ENCODE measurements at regions of chr4 and their contacts with region 1.

Region 1: DNA sequence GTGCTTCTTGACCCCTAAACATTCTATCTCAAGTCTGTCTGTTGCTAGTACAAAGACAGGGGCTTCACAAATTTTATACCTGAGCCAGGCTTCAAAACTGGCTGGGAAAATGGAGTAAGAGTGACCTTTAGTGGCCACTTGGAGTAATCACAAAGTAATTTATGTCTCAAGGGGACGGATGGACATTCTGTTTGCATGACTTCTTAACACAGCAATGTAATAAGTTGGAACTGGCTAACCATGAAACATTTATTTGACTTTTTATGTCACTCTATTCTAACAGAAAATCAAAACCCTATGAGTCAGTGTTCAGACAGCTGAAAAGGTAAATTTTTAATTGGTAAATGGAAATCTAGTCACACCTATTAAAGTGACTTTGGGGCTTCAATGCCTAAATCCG is 600.6 kb downstream of the ANKRD50 start:
- DNase-seq: peak; percentile 59
- ATAC-seq: peak; percentile 74; the same call in 1 of the 2 replicates
- H3K4me3 ChIP-seq: no peak overlapping the region
- H3K27ac ChIP-seq: no peak overlapping the region
- H3K4me1 ChIP-seq: no peaks in the 10 kb centered on the region
- H3K27me3 ChIP-seq: no peaks in the 10 kb centered on the region
- CTCF ChIP-seq: peak; percentile 44 to 77 (median 73); a peak in 5 of 6 replicates
- POLR2A ChIP-seq: no peak
- RAD21 ChIP-seq: peak; percentile 89

Region 2: GRCh38 chr4:123102897-123103471 is 1008.9 kb before region 1 on chr4:
- CTCF ChIA-PET with region 1: no interaction called
- POLR2A ChIA-PET with region 1: no interaction called
- RAD21 ChIA-PET with region 1: no interaction called
- intact Hi-C with region 1: loop called (anchors 1 kb)
- DNase-seq: peak; percentile 19
- ATAC-seq: peak; percentile 79
- H3K4me3 ChIP-seq: no peak overlapping the region
- H3K27ac ChIP-seq: no peak overlapping the region
- H3K4me1 ChIP-seq: no peaks in the 10 kb centered on the region
- H3K27me3 ChIP-seq: no peaks in the 10 kb centered on the region
- CTCF ChIP-seq: peak; percentile 42 to 74 (median 53); a peak in 5 of 6 replicates
- POLR2A ChIP-seq: no peak
- RAD21 ChIP-seq: peak; percentile 73

Region 3: GRCh38 chr4:123127218-123127617 is 984.7 kb before region 1 on chr4:
- CTCF ChIA-PET with region 1: no interaction called
- POLR2A ChIA-PET with region 1: no interaction called
- RAD21 ChIA-PET with region 1: no interaction called
- intact Hi-C with region 1: loop called (anchors 2 kb)
- DNase-seq: no peak
- ATAC-seq: no peak
- H3K4me3 ChIP-seq: no peak overlapping the region
- H3K27ac ChIP-seq: no peak overlapping the region
- H3K4me1 ChIP-seq: no peaks in the 10 kb centered on the region
- H3K27me3 ChIP-seq: no peaks in the 10 kb centered on the region
- CTCF ChIP-seq: peak in 1 of 3 experiments; percentile 29; a peak in 2 of 6 replicates
- POLR2A ChIP-seq: no peak
- RAD21 ChIP-seq: peak; percentile 51

Region 4: DNA sequence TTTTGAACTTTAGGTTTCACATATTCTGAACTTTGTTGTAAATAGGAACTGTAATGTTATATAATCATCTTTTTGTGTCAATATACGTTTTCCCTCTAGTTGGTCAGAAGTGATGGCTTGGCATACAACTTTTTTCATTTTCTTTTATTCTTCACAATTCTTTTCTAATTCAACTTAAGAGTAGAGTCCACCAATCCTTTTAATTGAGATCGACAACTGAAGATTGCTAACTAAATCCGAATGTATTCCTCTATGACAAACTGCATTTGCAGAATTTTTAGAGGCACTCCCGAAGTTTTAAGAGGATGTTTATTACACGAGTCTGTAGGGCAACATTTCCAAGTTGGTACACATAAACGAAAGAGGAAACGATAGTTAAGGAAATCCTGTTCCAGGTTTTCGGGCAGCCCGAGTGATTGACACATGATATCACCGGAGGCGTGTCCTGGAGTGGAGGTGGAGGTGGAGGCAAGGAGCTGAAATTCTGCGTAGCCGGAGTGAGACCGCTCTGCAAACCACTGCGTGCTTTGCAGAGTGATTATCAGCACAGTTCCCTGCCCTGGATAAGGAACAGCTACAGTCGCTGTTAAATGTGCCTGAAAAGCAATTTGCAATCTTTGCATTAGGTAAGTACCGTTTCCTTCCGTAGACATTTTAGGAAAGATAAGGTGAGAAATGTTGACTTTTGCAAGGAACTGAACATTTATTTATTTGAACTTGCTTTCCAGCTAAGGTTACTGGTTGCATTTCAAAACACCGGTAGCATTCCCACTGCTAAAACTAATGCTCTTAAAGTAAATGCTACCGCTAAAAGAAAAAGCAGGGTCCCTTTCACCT is 715.4 kb before region 1 on chr4 and contains the start of gene SPRY1:
- CTCF ChIA-PET with region 1: no interaction called
- POLR2A ChIA-PET with region 1: no interaction called
- RAD21 ChIA-PET with region 1: no interaction called
- intact Hi-C with region 1: loop called (anchors 10 kb)
- DNase-seq: peak; percentile 89
- ATAC-seq: peak; percentile 74
- H3K4me3 ChIP-seq: peak within 1 kb of the TSS; percentile 60 to 74
- H3K27ac ChIP-seq: peak within 1 kb of the TSS; percentile 50
- H3K4me1 ChIP-seq: peaks cover 3 to 30% of the 10 kb centered on the region in 2 experiments; a peak in 3 of 4 replicates
- H3K27me3 ChIP-seq: no peaks in the 10 kb centered on the region
- CTCF ChIP-seq: no peak
- POLR2A ChIP-seq: peak; percentile 75
- RAD21 ChIP-seq: no peak; the same call in 1 of the 2 replicates
- total RNA-seq, gene SPRY1: 4.8 TPM

Region 5: GRCh38 chr4:123661080-123661737 is 450.7 kb before region 1 on chr4:
- CTCF ChIA-PET with region 1: no interaction called
- POLR2A ChIA-PET with region 1: no interaction called
- RAD21 ChIA-PET with region 1: no interaction called
- intact Hi-C with region 1: loop called (anchors 2 kb)
- DNase-seq: peak; percentile 21
- ATAC-seq: no peak
- H3K4me3 ChIP-seq: no peak overlapping the region
- H3K27ac ChIP-seq: no peak overlapping the region
- H3K4me1 ChIP-seq: no peaks in the 10 kb centered on the region
- H3K27me3 ChIP-seq: no peaks in the 10 kb centered on the region
- CTCF ChIP-seq: peak; percentile 54 to 73 (median 65); a peak in 5 of 6 replicates
- POLR2A ChIP-seq: no peak
- RAD21 ChIP-seq: peak; percentile 74

Region 6: GRCh38 chr4:123776254-123776653 is 335.7 kb before region 1 on chr4:
- CTCF ChIA-PET with region 1: interaction called, 6 read pairs
- POLR2A ChIA-PET with region 1: no interaction called
- RAD21 ChIA-PET with region 1: no interaction called
- intact Hi-C with region 1: loop called (anchors 1 kb)
- DNase-seq: no peak
- ATAC-seq: no peak
- H3K4me3 ChIP-seq: no peak overlapping the region
- H3K27ac ChIP-seq: no peak overlapping the region
- H3K4me1 ChIP-seq: no peaks in the 10 kb centered on the region
- H3K27me3 ChIP-seq: no peaks in the 10 kb centered on the region
- CTCF ChIP-seq: no peak
- POLR2A ChIP-seq: no peak
- RAD21 ChIP-seq: no peak

Measured in HCT116 (cell line).